ENCODE measurements at regions of chr2 and their contacts with region 1.

Region 1: GRCh38 chr2:234288974-234289455 is 207.9 kb downstream of the ARL4C start:
- DNase-seq: peak; percentile 61
- H3K4me3 ChIP-seq: no peak overlapping the region
- H3K27ac ChIP-seq: no peak overlapping the region
- H3K4me1 ChIP-seq: no peaks in the 10 kb centered on the region
- H3K27me3 ChIP-seq: no peaks in the 10 kb centered on the region
- CTCF ChIP-seq: peak; percentile 91

Region 2: GRCh38 chr2:233728723-233729301 is 560.2 kb before region 1 on chr2 and contains the start of gene UGT1A3:
- CTCF ChIA-PET with region 1: no interaction called
- POLR2A ChIA-PET with region 1: no interaction called
- intact Hi-C with region 1: no loop called
- DNase-seq: no peak
- H3K4me3 ChIP-seq: no peak within 1 kb of the TSS
- H3K27ac ChIP-seq: no peak within 1 kb of the TSS
- H3K4me1 ChIP-seq: no peaks in the 10 kb centered on the region
- H3K27me3 ChIP-seq: no peaks in the 10 kb centered on the region
- CTCF ChIP-seq: no peak
- total RNA-seq, gene UGT1A3: not detected in 2 replicates

Region 3: DNA sequence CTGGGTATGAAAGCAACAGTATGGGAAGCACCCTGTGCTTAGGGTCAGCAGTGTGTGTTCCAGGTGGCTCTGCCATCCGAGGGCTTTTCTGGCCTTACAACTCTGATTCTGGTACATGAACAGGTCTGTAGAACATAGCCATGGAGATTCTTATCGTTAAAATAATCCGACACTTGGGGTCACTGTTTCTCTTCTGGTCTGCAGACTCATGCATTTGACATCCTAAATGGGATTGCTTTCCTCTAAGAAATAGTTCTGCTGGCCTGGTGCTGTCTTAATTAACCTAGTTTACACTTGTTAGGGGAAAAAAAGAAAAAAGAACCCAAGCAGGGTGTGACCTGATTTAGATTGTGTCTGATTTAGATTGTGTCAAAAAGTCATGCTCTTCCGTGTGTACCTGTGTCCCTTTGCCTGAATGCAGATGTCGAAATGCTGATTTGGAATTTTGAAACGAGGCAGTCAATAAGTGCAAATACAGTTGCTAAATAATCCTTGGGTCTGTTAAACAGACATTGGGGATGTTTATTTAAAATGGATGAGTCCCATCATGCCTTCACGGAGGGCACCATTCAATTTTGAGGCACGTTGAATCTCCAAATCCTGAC is 312.2 kb before region 1 on chr2:
- CTCF ChIA-PET with region 1: no interaction called
- POLR2A ChIA-PET with region 1: no interaction called
- intact Hi-C with region 1: loop called (anchors 10 kb)
- DNase-seq: peak; percentile 67
- H3K4me3 ChIP-seq: no peak overlapping the region
- H3K27ac ChIP-seq: no peak overlapping the region
- H3K4me1 ChIP-seq: no peaks in the 10 kb centered on the region
- H3K27me3 ChIP-seq: no peaks in the 10 kb centered on the region
- CTCF ChIP-seq: peak; percentile 56

Region 4: GRCh38 chr2:234500394-234501006 is 211.5 kb after region 1 on chr2:
- CTCF ChIA-PET with region 1: interaction called, 5 read pairs
- POLR2A ChIA-PET with region 1: no interaction called
- intact Hi-C with region 1: loop called (anchors 2 kb)
- DNase-seq: peak; percentile 57
- H3K4me3 ChIP-seq: no peak overlapping the region
- H3K27ac ChIP-seq: no peak overlapping the region
- H3K4me1 ChIP-seq: no peaks in the 10 kb centered on the region
- H3K27me3 ChIP-seq: no peaks in the 10 kb centered on the region
- CTCF ChIP-seq: peak; percentile 57

Region 5: DNA sequence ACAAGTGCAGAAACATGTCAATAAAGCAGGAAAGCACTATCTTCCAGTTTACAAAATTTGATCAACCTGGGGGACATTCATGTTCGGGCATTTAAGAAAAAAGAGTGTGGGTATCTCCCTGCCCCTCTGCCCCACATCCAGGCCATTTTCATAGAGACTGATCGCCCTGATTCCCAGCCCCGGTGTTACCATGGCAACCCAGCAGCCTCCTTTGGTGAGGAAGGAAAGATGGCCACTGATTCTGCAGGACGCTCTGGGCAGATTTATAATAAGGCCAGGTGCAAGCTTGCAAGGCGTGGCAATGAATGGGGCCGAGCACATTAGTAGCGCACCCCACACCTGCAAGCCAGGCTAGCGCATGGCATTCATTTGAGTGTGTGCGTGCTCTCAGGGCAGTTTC is 244.6 kb after region 1 on chr2:
- CTCF ChIA-PET with region 1: no interaction called
- POLR2A ChIA-PET with region 1: no interaction called
- intact Hi-C with region 1: no loop called
- DNase-seq: no peak
- H3K4me3 ChIP-seq: no peak overlapping the region
- H3K27ac ChIP-seq: no peak overlapping the region
- H3K4me1 ChIP-seq: no peaks in the 10 kb centered on the region
- H3K27me3 ChIP-seq: no peaks in the 10 kb centered on the region
- CTCF ChIP-seq: no peak

Region 6: DNA sequence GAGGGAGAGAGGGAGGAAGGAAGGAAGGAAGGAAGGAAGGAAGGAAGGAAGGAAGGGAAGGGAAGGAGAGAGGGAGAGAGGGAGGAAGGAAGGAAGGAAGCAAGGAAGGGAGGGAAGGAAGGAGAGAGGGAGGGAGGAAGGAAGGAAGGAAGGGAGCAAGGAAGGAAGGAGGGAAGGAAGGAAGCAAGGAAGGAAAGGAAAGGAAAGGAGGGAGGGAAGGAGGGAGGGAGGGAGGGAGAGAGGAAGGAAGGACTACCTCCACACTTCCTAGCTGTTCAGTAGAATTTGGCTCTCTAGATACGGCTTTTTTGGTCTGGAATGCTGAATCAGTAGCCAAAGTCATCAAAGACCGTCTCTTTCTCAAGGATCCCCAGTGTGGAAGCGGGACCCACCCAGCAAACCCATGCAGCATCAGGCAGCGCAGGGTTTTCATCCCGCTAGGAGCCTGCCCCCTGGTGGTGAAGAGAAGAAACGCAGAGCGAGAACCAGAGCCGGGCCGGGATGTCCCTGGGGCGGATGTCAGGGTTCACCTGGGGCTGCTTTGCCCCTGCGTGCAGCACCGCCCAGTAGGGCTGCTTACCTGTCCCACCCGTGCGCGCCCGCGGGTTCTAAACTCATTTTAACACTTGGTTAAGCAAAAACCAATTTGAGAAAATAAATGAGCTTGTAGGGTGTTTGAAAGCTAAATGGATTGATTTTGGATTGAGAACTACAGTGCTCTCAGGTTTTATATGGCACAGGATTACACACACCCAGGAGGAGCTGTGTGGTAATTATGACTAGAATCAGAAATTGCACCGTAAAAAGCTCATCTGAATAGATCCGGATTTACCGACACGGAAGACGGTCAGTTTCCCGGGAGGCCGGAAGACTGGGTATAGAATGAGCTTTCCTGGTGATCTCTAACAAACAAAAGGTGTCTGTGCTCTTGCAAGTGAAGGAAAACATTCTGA is 255.9 kb after region 1 on chr2:
- CTCF ChIA-PET with region 1: interaction called, 3 read pairs
- POLR2A ChIA-PET with region 1: no interaction called
- intact Hi-C with region 1: loop called (anchors 1 kb)
- DNase-seq: peak; percentile 78
- H3K4me3 ChIP-seq: no peak overlapping the region
- H3K27ac ChIP-seq: no peak overlapping the region
- H3K4me1 ChIP-seq: no peaks in the 10 kb centered on the region
- H3K27me3 ChIP-seq: no peaks in the 10 kb centered on the region
- CTCF ChIP-seq: peak; percentile 87

Region 7: DNA sequence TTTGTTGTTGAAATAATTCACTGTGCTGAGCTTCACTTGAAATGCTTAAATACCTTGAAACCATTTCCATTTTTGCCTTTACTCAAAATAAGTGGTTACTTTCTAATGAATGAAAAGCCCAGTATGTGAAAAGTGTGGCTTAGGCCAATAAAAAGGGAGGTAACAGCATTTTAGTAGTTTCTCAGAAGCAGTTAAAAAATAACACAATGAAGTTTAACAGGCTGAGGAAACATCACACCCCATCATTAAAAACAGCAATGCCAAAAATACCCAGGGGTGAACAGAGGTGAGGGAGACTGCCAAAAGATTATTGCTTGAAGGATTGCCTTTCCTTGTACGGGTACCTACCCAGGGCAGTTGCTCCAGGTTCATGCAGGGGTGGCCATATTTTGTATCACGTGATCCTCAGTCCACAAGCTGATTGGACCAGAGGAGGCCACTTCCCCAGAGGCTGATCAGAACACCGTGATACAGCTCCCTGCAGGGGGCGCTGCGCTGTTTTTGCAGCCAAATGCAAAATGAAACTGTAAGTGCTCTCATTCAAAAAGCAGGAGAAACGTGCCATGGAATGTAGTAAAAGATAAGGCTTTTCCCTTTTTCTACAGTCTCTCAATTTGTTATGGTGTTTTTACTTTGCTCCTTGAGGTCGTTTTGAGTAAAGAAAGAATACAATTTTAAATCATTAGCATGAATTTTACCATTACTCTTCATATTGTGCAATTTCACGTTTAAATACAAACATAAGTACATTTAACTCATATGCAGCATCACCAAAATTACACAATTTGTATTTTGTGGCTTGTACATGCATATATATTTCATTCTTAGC is 592.6 kb after region 1 on chr2:
- CTCF ChIA-PET with region 1: interaction called, 11 read pairs
- POLR2A ChIA-PET with region 1: no interaction called
- intact Hi-C with region 1: no loop called
- DNase-seq: peak; percentile 93
- H3K4me3 ChIP-seq: peak overlapping the region; percentile 18
- H3K27ac ChIP-seq: no peak overlapping the region
- H3K4me1 ChIP-seq: no peaks in the 10 kb centered on the region
- H3K27me3 ChIP-seq: no peaks in the 10 kb centered on the region
- CTCF ChIP-seq: peak; percentile 91

Region 8: GRCh38 chr2:235116885-235117492 is 828.0 kb after region 1 on chr2:
- CTCF ChIA-PET with region 1: interaction called, 5 read pairs
- POLR2A ChIA-PET with region 1: no interaction called
- intact Hi-C with region 1: loop called (anchors 2 kb)
- DNase-seq: peak; percentile 79
- H3K4me3 ChIP-seq: no peak overlapping the region
- H3K27ac ChIP-seq: no peak overlapping the region
- H3K4me1 ChIP-seq: no peaks in the 10 kb centered on the region
- H3K27me3 ChIP-seq: no peaks in the 10 kb centered on the region
- CTCF ChIP-seq: peak; percentile 74

Measured in A673 (cell line).